ENCODE measurements at regions of chr18 and their contacts with region 1.

Region 1: GRCh38 chr18:6056146-6056932 is 161.0 kb upstream of the TMEM200C start:
- DNase-seq: no peak
- ATAC-seq: peak in 2 of 8 donors; percentile 34 to 39
- H3K4me3 ChIP-seq: no peak overlapping the region
- H3K27ac ChIP-seq: peak overlapping the region in 5 of 10 donors; percentile 14 to 62 (median 37)
- H3K4me1 ChIP-seq: peaks cover 0 to 34% (median 11%) of the 10 kb centered on the region in 9 donors
- H3K27me3 ChIP-seq: no peaks in the 10 kb centered on the region
- CTCF ChIP-seq: no peak

Region 2: DNA sequence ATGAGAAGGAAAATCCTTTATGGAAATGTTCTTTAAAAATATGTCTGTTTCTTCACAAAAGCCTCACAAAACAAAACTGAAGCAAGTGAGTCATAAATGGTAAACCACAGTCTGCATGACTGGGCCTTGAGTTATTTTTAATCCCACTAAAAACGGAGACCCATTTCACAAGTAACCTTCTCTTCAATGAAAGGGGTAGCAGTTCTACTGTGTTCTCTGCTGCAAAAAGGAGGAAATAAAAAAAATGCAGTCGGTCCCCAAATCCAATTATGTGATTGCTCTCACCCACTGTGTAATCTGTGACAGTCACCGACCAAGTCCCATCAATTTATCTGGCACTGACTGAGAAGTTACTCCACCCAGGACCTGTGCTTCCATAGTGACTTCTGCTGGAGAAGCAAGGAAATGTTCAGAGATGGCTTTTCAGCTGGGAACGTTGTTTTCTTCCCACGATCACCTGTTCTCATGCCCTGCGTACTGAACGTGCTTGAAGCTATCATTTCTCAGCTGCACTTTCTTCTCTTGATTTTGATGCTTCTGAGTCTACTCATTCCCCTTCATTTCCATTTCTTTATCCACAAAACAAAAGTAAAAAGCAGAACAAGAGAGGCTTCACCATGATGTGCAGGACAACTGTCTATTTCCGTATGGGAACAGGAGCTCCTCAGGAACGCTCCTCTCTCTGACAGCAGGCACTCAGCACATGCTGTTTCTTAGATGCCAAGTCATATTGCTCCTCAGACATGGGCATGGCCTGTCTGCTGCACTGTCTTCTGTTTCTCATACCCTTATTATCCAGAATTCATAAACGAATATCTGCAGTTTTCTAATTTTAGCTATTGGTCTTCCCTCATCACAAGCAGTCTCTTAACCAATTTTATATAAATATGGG is 81.0 kb before region 1 on chr18:
- intact Hi-C with region 1: loop called in 1 of 10 experiments (anchors 5 kb)
- DNase-seq: no peak
- ATAC-seq: no peak
- H3K4me3 ChIP-seq: no peak overlapping the region
- H3K27ac ChIP-seq: no peak overlapping the region
- H3K4me1 ChIP-seq: peaks cover 0 to 22% (median 0%) of the 10 kb centered on the region in 9 donors
- H3K27me3 ChIP-seq: peaks cover 0 to 4% (median 0%) of the 10 kb centered on the region in 7 donors
- CTCF ChIP-seq: no peak

Region 3: GRCh38 chr18:5982332-5982731 is 74.0 kb before region 1 on chr18:
- intact Hi-C with region 1: loop called in 2 of 10 experiments (anchors 2 to 5 kb)
- DNase-seq: no peak
- ATAC-seq: no peak
- H3K4me3 ChIP-seq: no peak overlapping the region
- H3K27ac ChIP-seq: no peak overlapping the region
- H3K4me1 ChIP-seq: peaks cover 0 to 7% (median 0%) of the 10 kb centered on the region in 9 donors
- H3K27me3 ChIP-seq: peaks cover 0 to 2% (median 0%) of the 10 kb centered on the region in 7 donors
- CTCF ChIP-seq: no peak

Region 4: GRCh38 chr18:6109743-6110142 is 53.4 kb after region 1 on chr18:
- intact Hi-C with region 1: loop called in 2 of 10 experiments (anchors 10 kb)
- DNase-seq: no peak
- ATAC-seq: peak in 3 of 8 donors; percentile 55 to 74 (median 59)
- H3K4me3 ChIP-seq: no peak overlapping the region
- H3K27ac ChIP-seq: no peak overlapping the region
- H3K4me1 ChIP-seq: peaks cover 0 to 4% (median 0%) of the 10 kb centered on the region in 9 donors
- H3K27me3 ChIP-seq: no peaks in the 10 kb centered on the region
- CTCF ChIP-seq: no peak

Region 5: DNA sequence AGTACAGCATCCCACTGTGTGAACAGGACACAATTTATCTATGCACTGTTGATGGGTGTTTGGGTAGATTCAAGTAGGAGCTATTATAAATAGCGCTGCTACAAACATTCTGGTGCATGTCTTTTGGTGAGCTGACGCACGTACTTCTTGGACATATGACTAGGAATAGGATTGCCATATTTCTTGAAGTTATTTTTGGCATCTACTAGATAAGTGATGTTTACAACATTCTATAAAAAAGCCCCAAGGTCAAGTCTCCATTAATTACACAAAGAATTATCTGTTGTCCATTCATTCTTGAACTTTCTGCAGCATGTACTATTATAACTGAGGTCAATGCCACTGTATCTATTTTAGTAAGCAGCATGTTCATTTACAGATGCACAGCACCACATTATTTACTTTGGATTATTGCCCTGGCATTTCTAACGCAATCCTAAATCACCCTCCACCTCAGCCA is 64.5 kb after region 1 on chr18:
- intact Hi-C with region 1: loop called in 3 of 10 experiments (anchors 5 to 10 kb)
- DNase-seq: peak in 1 of 2 donors; percentile 26
- ATAC-seq: peak; percentile 49 to 98 (median 94)
- H3K4me3 ChIP-seq: no peak overlapping the region
- H3K27ac ChIP-seq: peak overlapping the region in 7 of 10 donors; percentile 9 to 69 (median 54)
- H3K4me1 ChIP-seq: peaks cover 3 to 38% (median 9%) of the 10 kb centered on the region in 9 donors
- H3K27me3 ChIP-seq: no peaks in the 10 kb centered on the region
- CTCF ChIP-seq: no peak

Region 6: GRCh38 chr18:6132751-6133368 is 76.5 kb after region 1 on chr18:
- intact Hi-C with region 1: loop called in 3 of 10 experiments (anchors 5 to 10 kb)
- DNase-seq: peak; percentile 22 to 50
- ATAC-seq: peak in 7 of 8 donors; percentile 79 to 99 (median 96)
- H3K4me3 ChIP-seq: no peak overlapping the region
- H3K27ac ChIP-seq: peak overlapping the region in 2 of 10 donors; percentile 6 to 51
- H3K4me1 ChIP-seq: peaks cover 0 to 20% (median 5%) of the 10 kb centered on the region in 9 donors
- H3K27me3 ChIP-seq: no peaks in the 10 kb centered on the region
- CTCF ChIP-seq: no peak